Activated CD8-positive, alpha-beta T cell treated with anti-CD3 and anti-CD28 coated beads, Interleukin-2, amount 10 ng/mL, durations not matched to agents 7 days and 5 days (primary cell): ENCODE measurements at regions of chr22 and their contacts with region 1.

Region 1: GRCh38 chr22:29202212-29203192 is 3.2 kb upstream of the EMID1 start:
- DNase-seq: peak; percentile 82
- ATAC-seq: peak; percentile 81
- H3K4me3 Mint-ChIP-seq: peak overlapping the region; percentile 48
- H3K27ac Mint-ChIP-seq: peak overlapping the region; percentile 89
- H3K4me1 Mint-ChIP-seq: peaks cover 30% of the 10 kb centered on the region
- H3K27me3 Mint-ChIP-seq: peaks cover 53% of the 10 kb centered on the region

Region 2: DNA sequence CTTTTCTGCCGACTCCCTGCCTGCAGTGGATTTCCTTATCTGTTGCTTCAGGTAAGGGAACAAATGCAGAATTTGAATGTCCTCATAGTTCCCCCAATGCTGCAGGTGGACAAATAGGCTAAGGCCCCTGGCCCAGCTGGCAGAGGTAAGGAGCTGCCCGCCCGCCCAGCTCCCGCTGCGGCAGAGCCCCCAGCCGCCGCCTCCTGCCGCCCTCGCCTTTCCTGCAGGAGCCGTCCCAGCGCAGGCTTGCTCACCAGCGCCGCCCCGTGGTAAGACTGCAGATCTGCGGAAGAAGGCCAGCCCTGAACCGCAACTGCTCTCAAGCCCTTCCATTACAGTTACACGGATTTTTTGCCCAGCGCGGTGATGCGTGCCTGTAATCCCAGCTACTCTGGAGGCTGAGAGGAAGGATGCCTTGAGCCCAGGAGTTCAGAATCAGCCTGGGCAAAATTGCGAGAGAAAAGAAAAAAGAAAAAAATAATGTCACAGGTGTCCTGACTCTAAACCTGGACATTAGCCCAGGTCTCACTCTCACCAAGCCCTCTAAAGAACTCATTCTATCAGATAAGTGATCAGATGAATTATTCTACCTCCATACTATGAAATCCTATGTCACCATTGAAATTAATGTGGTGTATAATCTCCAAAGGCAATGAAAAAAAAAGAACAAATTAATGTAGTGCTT is 48.0 kb before region 1 on chr22:
- CTCF ChIA-PET with region 1: interaction called, 11 read pairs
- POLR2A ChIA-PET with region 1: interaction called, 3 read pairs
- DNase-seq: peak; percentile 79
- ATAC-seq: peak; percentile 90
- H3K4me3 Mint-ChIP-seq: no peak overlapping the region
- H3K27ac Mint-ChIP-seq: no peak overlapping the region
- H3K4me1 Mint-ChIP-seq: peaks cover 19% of the 10 kb centered on the region
- H3K27me3 Mint-ChIP-seq: peaks cover 21% of the 10 kb centered on the region